ENCODE measurements at regions of chr1 and their contacts with region 1.

Region 1: GRCh38 chr1:107499139-107499744 is 358.4 kb downstream of the NTNG1 start:
- DNase-seq: no peak

Region 2: GRCh38 chr1:106889059-106889458 is 610.2 kb before region 1 on chr1:
- intact Hi-C with region 1: loop called in 1 of 2 experiments (anchors 5 kb)
- DNase-seq: no peak

Region 3: GRCh38 chr1:107704911-107705310 is 205.7 kb after region 1 on chr1:
- intact Hi-C with region 1: loop called in 1 of 2 experiments (anchors 2 kb)
- DNase-seq: no peak